A549 (cell line): ENCODE measurements at regions of chr19 and their contacts with region 1.

Region 1: DNA sequence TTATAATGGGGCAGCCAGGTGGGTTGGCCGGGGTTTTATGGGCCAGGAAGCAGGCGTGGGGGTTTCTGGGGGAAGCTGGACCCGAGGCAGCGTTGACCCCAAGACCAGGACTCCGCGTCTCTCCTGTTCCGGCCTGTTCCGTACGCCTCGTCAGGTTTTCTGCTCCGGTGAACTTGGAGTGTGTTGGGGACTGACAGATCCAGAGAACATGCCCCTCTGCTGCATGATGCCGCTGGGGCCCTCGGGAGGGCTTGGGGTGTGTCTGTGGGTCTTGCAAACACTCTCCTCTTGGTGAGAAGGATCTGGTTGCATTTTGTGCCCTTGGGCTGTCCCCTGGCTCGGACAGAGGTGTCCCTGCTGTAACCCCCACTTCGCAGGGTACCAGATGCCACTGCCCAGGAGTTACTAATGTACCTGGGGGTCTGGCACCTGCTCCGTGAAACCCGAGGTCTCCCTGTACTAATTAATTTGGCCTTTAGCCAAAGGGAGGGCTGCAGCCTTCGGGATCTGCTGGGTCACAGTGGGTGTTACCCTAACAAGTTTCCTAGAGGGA is 15.6 kb downstream of the KDM4B start:
- DNase-seq: no peak
- ATAC-seq: no peak
- H3K4me3 ChIP-seq: no peak overlapping the region
- H3K27ac ChIP-seq: no peak overlapping the region
- H3K4me1 ChIP-seq: peaks cover 5% of the 10 kb centered on the region; the same call in 1 of the 3 replicates
- CTCF ChIP-seq: no peak
- EP300 ChIP-seq: no peak
- POLR2A ChIP-seq: no peak
- RAD21 ChIP-seq: no peak

Region 2: GRCh38 chr19:4972509-4973230 is 11.8 kb before region 1 on chr19:
- CTCF ChIA-PET with region 1: interaction called, 10 read pairs
- POLR2A ChIA-PET with region 1: no interaction called
- DNase-seq: peak in 1 of 2 experiments; percentile 32
- ATAC-seq: no peak
- H3K4me3 ChIP-seq: no peak overlapping the region
- H3K27ac ChIP-seq: peak overlapping the region; percentile 70 to 95
- H3K4me1 ChIP-seq: peaks cover 55% of the 10 kb centered on the region
- CTCF ChIP-seq: no peak
- EP300 ChIP-seq: no peak
- POLR2A ChIP-seq: no peak
- RAD21 ChIP-seq: no peak